ENCODE measurements at regions of chr14 and their contacts with region 1.

Region 1: DNA sequence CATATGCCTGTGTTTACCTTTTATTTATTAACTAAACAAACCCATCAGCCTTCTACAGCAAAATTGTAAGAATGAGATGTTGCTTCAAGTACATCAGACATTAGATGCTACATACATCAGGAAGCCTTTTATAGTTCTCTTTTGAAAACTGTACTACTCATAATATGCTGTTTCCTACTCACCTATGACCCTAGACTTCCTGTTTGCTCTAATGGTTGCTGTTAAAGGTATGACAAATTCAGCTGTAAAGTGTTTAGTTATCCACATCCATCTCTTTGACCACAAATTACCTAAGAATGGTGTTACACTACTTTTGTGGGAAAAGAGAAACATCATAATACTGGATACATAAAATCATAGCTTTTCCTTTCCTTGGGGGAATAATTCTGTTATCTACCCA is 220.0 kb downstream of the RAD51B start:
- DNase-seq: no peak
- H3K4me3 ChIP-seq: no peak overlapping the region
- H3K27ac ChIP-seq: peak overlapping the region; percentile 71 to 86 (median 76)
- H3K4me1 ChIP-seq: peaks cover 3 to 54% (median 14%) of the 10 kb centered on the region in 4 donors
- H3K27me3 ChIP-seq: no peaks in the 10 kb centered on the region
- CTCF ChIP-seq: no peak
- EP300 ChIP-seq: no peak
- POLR2A ChIP-seq: no peak

Region 2: GRCh38 chr14:67784244-67784823 is 255.3 kb before region 1 on chr14:
- in situ Hi-C with region 1: no loop called
- intact Hi-C with region 1: no loop called
- DNase-seq: no peak
- H3K4me3 ChIP-seq: no peak overlapping the region
- H3K27ac ChIP-seq: no peak overlapping the region
- H3K4me1 ChIP-seq: no peaks in the 10 kb centered on the region
- H3K27me3 ChIP-seq: no peaks in the 10 kb centered on the region
- CTCF ChIP-seq: no peak
- EP300 ChIP-seq: no peak
- POLR2A ChIP-seq: no peak

Region 3: GRCh38 chr14:68076451-68076850 is 36.9 kb after region 1 on chr14:
- in situ Hi-C with region 1: no loop called
- intact Hi-C with region 1: no loop called
- DNase-seq: no peak
- H3K4me3 ChIP-seq: no peak overlapping the region
- H3K27ac ChIP-seq: no peak overlapping the region
- H3K4me1 ChIP-seq: peaks cover 0 to 21% (median 0%) of the 10 kb centered on the region in 4 donors
- H3K27me3 ChIP-seq: no peaks in the 10 kb centered on the region
- CTCF ChIP-seq: no peak
- EP300 ChIP-seq: no peak
- POLR2A ChIP-seq: no peak

Region 4: GRCh38 chr14:68191567-68192321 is 152.2 kb after region 1 on chr14:
- in situ Hi-C with region 1: no loop called
- intact Hi-C with region 1: loop called (anchors 5 kb)
- DNase-seq: no peak
- H3K4me3 ChIP-seq: no peak overlapping the region
- H3K27ac ChIP-seq: peak overlapping the region; percentile 71 to 84 (median 77)
- H3K4me1 ChIP-seq: peaks cover 0 to 48% (median 29%) of the 10 kb centered on the region in 4 donors
- H3K27me3 ChIP-seq: no peaks in the 10 kb centered on the region
- CTCF ChIP-seq: peak in 2 of 5 experiments; percentile 37 to 43
- EP300 ChIP-seq: peak; percentile 50
- POLR2A ChIP-seq: no peak

Measured in transverse colon (tissue), 4 donors.